Activated CD4-positive, alpha-beta T cell treated with anti-CD3 and anti-CD28 coated beads, Interleukin-2, amount 10 ng/mL, durations not matched to agents 24 days and 14 days (primary cell): ENCODE measurements at regions of chr1 and their contacts with region 1.

Region 1: GRCh38 chr1:248837794-248838356 is at the start of gene ZNF672:
- DNase-seq: peak; percentile 99
- H3K4me3 Mint-ChIP-seq: no peak within 1 kb of the TSS
- H3K27ac Mint-ChIP-seq: no peak within 1 kb of the TSS
- H3K4me1 Mint-ChIP-seq: peaks cover 28% of the 10 kb centered on the region
- H3K27me3 Mint-ChIP-seq: peaks cover 2% of the 10 kb centered on the region
- total RNA-seq, gene ZNF672: 44.0 and 48.8 TPM in 2 replicates

Region 2: DNA sequence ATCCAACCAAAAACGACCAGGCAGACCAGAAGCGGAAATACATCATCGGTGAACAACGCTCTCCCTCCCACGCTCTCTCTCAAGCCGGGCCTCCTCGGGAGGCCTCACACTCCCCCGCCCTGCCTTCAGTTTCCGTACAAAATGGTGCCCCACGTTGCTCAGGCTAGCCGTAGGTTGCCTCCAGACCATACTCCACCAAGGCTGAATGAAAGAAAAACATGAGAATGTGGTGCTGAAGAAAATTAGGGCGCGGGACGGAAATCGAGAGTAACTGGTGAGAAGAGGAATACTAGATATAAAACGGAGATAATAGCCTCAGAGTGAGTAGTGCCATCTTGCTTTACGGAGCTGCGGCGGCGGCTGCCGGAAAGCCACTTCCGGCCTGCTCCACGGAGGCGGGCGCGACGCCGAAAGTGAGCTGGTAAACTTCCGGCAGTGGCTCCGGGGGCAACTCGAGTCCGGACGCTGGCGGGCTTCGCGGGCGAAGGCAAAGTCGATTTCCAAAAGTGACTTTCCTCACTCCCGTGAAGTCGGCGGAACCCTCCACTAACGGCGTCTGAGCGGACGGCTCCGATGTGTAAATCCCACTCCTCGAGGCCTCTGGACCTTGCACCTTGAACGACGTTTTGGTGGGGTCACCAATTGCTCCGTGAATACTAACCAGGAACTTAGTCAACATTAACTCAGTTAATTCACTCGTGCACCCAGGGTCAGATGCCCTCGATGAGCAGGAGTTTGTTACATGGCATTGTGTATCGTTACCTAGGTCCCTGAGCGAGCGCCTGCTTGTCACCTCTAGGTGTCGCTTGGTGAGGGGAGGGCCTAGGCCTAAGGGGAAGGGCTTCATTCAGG is 11.7 kb before region 1 on chr1 and contains the start of gene SH3BP5L:
- intact Hi-C with region 1: loop called (anchors 1 kb)
- DNase-seq: peak; percentile 97
- H3K4me3 Mint-ChIP-seq: peak within 1 kb of the TSS; percentile 93
- H3K27ac Mint-ChIP-seq: peak within 1 kb of the TSS; percentile 100
- H3K4me1 Mint-ChIP-seq: peaks cover 45% of the 10 kb centered on the region
- H3K27me3 Mint-ChIP-seq: peaks cover 5% of the 10 kb centered on the region
- total RNA-seq, gene SH3BP5L: 27.5 and 28.2 TPM in 2 replicates